IMR-90 (cell line): ENCODE measurements at regions of chr6 and their contacts with region 1.

Region 1: GRCh38 chr6:39791850-39792539 is at the start of gene DAAM2:
- DNase-seq: peak; percentile 41
- ATAC-seq: peak; percentile 88
- H3K4me3 ChIP-seq: peak within 1 kb of the TSS; percentile 49
- H3K27ac ChIP-seq: peak within 1 kb of the TSS; percentile 35
- H3K4me1 ChIP-seq: peaks cover 14% of the 10 kb centered on the region
- H3K27me3 ChIP-seq: no peaks in the 10 kb centered on the region
- CTCF ChIP-seq: peak; percentile 27; the same call in 1 of the 2 replicates
- POLR2A ChIP-seq: no peak
- RAD21 ChIP-seq: no peak
- total RNA-seq, gene DAAM2: 12.9 and 13.1 TPM in 2 replicates

Region 2: DNA sequence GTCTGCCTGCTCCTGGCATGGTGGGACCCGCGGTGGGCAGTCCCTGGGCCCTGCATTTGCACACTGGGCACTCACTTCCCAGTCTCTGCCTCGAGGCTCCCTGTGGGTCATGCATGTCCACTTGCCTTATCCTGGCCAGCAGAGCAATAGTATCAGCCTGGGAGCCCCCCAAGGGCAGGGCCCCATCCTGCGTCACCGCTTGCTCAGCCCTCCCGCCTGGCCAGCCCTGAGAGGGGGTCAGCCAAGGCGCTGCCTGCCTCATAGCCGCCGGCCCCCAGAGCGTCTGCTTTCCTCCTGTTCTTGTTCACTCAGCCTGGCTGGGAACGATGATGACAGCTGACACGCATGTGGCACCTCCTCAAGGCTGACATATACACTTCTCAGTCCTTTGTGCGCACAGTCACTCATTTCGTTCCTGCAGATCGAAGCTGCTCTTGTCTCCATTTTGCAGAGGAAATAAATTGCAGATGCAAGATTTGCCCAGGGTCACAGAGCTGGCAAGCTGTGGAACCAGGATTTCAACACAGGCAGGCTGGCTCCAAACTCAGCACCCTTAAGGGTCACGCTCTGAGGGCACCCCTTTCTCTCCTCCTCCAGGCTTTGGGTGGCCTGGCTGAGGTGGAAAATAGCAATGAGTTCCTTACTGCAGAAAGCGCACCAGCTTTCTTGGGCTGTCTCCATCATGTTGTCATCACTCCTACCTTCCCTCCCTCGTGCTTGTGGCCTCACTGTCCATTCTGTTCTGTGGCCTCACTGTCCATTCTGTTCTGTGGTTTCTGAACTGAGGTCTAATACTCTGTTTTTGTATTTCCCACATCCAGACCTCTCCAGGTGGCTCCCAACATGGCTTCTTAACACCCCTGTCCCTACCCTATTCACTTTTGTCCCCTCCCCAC is 495.0 kb before region 1 on chr6:
- CTCF ChIA-PET with region 1: no interaction called
- POLR2A ChIA-PET with region 1: no interaction called
- dilution Hi-C with region 1: no loop called
- in situ Hi-C with region 1: no loop called
- intact Hi-C with region 1: no loop called
- DNase-seq: peak; percentile 26
- ATAC-seq: no peak; the same call in 1 of the 2 replicates
- H3K4me3 ChIP-seq: no peak overlapping the region
- H3K27ac ChIP-seq: no peak overlapping the region
- H3K4me1 ChIP-seq: no peaks in the 10 kb centered on the region
- H3K27me3 ChIP-seq: no peaks in the 10 kb centered on the region; the same call in 1 of the 2 replicates
- CTCF ChIP-seq: no peak
- POLR2A ChIP-seq: no peak
- RAD21 ChIP-seq: no peak

Region 3: GRCh38 chr6:39724787-39725631 is 67.0 kb before region 1 on chr6 and contains the start of gene KIF6:
- CTCF ChIA-PET with region 1: no interaction called
- POLR2A ChIA-PET with region 1: no interaction called
- dilution Hi-C with region 1: no loop called
- in situ Hi-C with region 1: no loop called
- intact Hi-C with region 1: loop called (anchors 1 kb)
- DNase-seq: peak; percentile 73
- ATAC-seq: peak; percentile 100
- H3K4me3 ChIP-seq: peak within 1 kb of the TSS; percentile 79
- H3K27ac ChIP-seq: no peak within 1 kb of the TSS
- H3K4me1 ChIP-seq: no peaks in the 10 kb centered on the region; the same call in 1 of the 2 replicates
- H3K27me3 ChIP-seq: no peaks in the 10 kb centered on the region
- CTCF ChIP-seq: no peak
- POLR2A ChIP-seq: no peak
- RAD21 ChIP-seq: no peak
- total RNA-seq, gene KIF6: under 0.01 TPM in 1 of 2 replicates, not detected in the other

Region 4: GRCh38 chr6:39843305-39844020 is 51.5 kb after region 1 on chr6:
- CTCF ChIA-PET with region 1: no interaction called
- POLR2A ChIA-PET with region 1: no interaction called
- dilution Hi-C with region 1: no loop called
- in situ Hi-C with region 1: no loop called
- intact Hi-C with region 1: loop called (anchors 5 kb)
- DNase-seq: peak; percentile 6
- ATAC-seq: no peak
- H3K4me3 ChIP-seq: no peak overlapping the region
- H3K27ac ChIP-seq: no peak overlapping the region
- H3K4me1 ChIP-seq: peaks cover 7% of the 10 kb centered on the region
- H3K27me3 ChIP-seq: no peaks in the 10 kb centered on the region
- CTCF ChIP-seq: no peak
- POLR2A ChIP-seq: no peak
- RAD21 ChIP-seq: no peak

Region 5: DNA sequence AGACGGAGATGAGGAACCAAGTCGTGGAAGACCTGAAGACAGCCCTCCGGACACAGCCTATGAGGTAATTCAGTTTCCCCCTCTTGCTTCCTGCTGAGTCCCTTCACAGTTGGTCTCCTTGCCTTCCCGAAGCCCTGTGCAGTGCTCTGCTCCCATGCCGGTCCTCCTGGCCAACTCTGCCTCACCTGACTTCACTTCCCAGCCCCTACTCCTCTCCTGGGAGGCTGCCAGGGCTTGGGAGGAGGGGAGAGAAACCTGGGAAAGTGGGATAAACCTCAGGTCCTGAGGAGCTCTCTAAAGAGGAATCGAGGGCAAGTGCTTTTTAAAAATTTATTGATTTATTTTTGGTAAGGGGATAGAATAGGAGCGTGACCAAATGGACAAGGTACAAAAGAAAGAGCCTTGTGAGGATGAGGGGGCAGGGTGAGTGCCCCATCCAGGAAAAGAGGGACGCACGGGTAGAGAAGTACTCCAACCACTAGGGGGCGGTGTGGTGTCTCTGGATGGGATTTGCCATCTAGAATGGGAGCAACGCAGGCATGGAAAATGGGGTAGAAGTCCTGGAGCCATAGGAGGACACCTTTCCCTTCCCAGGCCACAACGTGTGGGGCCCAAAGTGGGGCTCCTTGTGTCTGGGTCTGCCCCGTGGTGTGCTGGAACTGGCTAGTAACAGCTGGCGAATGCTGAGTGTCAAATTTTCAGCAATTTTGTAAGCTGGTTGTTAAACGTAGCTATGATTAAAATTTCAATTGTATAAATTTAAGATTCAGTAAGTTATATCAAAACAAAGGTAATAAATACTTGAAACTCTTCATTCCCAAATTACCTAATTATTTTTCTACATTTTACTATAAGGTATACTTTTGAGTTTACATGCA is 73.3 kb after region 1 on chr6:
- CTCF ChIA-PET with region 1: interaction called, 12 read pairs
- POLR2A ChIA-PET with region 1: no interaction called
- dilution Hi-C with region 1: no loop called
- in situ Hi-C with region 1: no loop called
- intact Hi-C with region 1: loop called (anchors 2 kb)
- DNase-seq: peak; percentile 60
- ATAC-seq: peak; percentile 90
- H3K4me3 ChIP-seq: no peak overlapping the region
- H3K27ac ChIP-seq: no peak overlapping the region
- H3K4me1 ChIP-seq: no peaks in the 10 kb centered on the region
- H3K27me3 ChIP-seq: no peaks in the 10 kb centered on the region
- CTCF ChIP-seq: peak; percentile 74
- POLR2A ChIP-seq: no peak
- RAD21 ChIP-seq: peak; percentile 81

Region 6: DNA sequence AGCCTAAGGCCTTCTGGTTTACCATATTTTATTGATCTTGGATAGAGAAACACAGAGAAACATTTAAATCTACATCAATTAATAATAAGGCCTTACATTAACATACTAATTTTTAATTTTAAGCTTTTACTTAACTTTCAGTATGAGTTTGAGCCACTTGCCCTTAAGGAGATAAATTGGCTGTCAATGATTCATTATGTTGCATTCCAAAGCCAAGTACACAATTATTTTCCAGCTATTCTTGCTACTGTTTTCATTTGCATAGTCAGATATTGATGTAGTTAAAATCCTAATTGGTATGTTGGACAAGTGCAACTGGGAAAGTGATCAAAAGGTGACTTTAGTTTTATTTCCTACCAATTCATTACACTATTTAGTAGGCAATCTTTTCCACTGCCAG is 84.1 kb after region 1 on chr6:
- CTCF ChIA-PET with region 1: no interaction called
- POLR2A ChIA-PET with region 1: no interaction called
- dilution Hi-C with region 1: no loop called
- in situ Hi-C with region 1: no loop called
- intact Hi-C with region 1: no loop called
- DNase-seq: peak; percentile 26
- ATAC-seq: no peak
- H3K4me3 ChIP-seq: no peak overlapping the region
- H3K27ac ChIP-seq: no peak overlapping the region
- H3K4me1 ChIP-seq: peaks cover 9% of the 10 kb centered on the region
- H3K27me3 ChIP-seq: no peaks in the 10 kb centered on the region
- CTCF ChIP-seq: no peak
- POLR2A ChIP-seq: no peak
- RAD21 ChIP-seq: no peak

Region 7: DNA sequence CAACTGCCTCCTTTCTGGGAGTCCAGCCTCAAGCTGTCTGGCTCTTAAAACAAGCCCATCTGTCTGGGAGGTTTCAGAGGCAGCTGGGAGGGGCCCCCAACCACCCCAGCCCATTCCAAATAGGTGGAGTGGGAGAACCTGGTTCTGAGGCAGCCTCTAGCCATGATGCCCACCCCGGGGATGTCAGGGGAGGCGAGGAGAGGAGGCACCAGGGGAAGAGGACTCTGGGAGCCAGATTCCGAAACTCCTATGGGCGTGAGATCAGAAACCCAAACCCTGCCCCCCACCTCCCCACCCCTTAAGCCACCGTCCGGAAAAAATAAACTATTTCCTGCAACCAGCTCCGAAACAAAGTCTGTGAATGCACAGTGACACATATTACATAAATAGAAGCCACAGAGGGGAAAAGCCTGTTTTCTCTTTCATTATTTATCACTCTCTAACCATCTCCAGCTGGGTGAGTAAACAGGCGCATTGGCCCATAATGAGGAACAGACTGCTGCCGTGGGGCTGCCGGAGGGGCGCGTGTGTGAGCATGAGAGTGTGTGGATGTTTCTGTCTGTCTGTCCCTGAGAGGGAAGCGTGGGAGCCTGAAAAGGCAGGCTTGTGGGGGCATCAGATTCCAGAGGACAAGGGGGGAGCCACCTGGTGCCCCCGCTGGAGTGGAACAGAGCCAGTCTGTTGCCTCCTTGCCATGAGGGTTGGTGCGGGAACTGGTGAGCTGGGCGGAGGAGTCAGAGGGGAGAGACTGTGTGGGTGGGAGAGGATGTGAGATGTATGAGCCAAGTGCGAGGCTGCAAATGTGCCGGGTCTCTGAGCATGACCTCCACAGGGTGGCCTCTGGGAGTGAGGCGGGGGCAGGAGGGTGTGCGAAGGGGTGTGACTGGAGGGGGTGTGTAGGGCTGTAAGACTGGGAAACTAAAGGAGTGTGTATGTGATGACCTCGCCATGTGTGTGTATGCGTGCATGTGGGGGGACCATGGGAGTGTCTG is 1739.9 kb after region 1 on chr6:
- CTCF ChIA-PET with region 1: no interaction called
- POLR2A ChIA-PET with region 1: no interaction called
- dilution Hi-C with region 1: no loop called
- in situ Hi-C with region 1: no loop called
- intact Hi-C with region 1: no loop called
- DNase-seq: peak; percentile 67
- ATAC-seq: peak; percentile 75
- H3K4me3 ChIP-seq: no peak overlapping the region
- H3K27ac ChIP-seq: no peak overlapping the region
- H3K4me1 ChIP-seq: peaks cover 6% of the 10 kb centered on the region; the same call in 1 of the 2 replicates
- H3K27me3 ChIP-seq: peaks cover 65% of the 10 kb centered on the region
- CTCF ChIP-seq: no peak
- POLR2A ChIP-seq: no peak
- RAD21 ChIP-seq: no peak